Lower leg skin (tissue), 4 donors: ENCODE measurements at regions of chr1 and their contacts with region 1.

Region 1: DNA sequence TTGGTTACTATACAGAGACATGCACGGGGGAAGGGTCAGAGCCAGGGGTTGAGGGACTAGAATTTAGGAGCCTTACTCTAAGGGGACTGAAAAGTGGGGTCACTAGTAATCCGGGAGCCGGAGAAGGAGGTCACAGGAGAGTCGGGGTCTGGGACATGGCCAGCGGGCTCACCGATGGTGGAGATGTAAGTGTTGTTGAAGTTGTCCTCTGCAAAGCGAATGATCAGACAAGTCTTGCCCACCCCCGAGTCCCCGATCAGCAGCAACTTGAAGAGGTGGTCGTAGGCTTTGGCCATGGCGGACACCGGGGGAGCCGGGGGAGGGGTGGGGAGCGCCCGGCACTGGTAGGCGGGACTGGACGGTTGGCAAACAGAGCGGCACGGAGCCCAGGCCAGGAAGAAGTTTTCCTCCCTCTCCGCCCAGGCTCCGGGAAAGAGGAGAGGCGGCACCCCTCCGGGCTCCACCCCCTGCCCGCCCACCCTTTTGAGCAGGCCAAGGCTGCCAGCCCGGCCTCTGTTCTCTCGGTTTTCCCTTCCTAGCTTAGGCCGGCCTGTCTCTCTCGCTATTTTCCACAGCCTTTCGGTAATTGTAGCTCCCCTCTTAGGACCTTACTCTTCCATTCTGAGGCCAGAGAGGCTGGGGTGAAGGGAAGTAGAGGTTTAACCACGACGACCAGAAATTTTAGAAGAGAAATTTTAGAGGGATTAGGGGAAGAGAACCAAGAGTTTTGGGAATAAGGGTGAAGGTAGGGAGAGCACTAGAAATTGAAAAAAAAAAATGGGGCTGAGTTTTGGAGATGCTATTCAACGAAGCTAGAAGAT is at the start of gene RAB13:
- DNase-seq: peak; percentile 84 to 97
- H3K4me3 ChIP-seq: peak within 1 kb of the TSS; percentile 40
- CTCF ChIP-seq: peak in 1 of 3 donors; percentile 11
- POLR2A ChIP-seq: no peak
- total RNA-seq, gene RAB13: 15.6 to 29.4 (median 25.4) TPM

Region 2: DNA sequence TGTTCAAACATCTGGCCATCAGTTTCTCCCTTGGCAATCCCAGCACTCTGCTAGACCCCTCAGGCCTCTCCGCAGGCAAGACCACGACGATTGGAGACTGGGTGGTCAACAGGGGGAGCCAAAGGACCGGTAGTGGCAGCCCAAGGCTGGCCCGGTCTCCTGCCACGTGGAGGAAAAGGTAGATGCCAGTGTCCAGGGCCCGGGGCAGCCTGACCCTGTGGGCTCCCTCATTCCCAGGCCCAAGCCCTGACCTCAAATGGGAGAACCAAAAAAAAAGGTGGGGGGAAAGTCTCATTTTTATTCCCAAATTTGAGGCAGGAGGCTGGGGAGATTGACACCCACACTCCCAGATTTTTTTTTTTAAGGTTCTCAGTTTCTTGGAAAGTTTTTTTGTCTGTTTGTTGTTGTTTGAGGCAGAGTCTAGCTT is 475.2 kb before region 1 on chr1:
- intact Hi-C with region 1: loop called (anchors 10 kb)
- DNase-seq: peak in 1 of 2 donors; percentile 95
- H3K4me3 ChIP-seq: no peak overlapping the region
- CTCF ChIP-seq: peak in 1 of 3 donors; percentile 85
- POLR2A ChIP-seq: no peak

Region 3: DNA sequence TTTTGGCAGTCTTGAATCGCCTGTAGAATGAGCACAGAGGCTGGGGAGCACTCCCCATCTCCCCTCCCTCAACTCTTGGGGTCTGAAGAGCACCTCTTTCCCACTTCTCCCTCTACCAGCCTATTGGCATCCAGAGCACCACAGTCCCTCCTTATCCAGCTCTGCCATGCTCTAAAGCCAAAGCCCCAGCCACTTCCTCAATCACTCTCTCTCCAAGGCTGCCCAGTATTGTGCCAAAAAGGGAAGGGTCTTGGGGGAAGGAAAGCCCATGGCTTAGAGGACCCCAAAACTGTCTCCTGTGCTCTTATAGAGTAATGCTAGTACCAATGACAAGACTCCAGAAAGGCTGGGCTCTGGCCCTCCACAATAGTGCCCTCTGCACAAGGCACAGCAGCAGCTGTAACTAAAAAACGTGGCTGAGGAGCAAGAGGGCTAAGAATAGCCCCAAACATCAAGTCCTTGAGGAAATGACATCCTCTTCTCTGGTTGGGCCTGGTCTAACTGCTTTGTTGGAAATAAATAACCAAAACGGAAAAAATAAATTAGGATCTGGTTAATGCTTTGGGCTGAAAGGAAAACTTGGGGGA is 182.6 kb before region 1 on chr1:
- intact Hi-C with region 1: loop called (anchors 5 kb)
- DNase-seq: peak in 1 of 2 donors; percentile 66
- H3K4me3 ChIP-seq: no peak overlapping the region
- CTCF ChIP-seq: no peak
- POLR2A ChIP-seq: no peak

Region 4: DNA sequence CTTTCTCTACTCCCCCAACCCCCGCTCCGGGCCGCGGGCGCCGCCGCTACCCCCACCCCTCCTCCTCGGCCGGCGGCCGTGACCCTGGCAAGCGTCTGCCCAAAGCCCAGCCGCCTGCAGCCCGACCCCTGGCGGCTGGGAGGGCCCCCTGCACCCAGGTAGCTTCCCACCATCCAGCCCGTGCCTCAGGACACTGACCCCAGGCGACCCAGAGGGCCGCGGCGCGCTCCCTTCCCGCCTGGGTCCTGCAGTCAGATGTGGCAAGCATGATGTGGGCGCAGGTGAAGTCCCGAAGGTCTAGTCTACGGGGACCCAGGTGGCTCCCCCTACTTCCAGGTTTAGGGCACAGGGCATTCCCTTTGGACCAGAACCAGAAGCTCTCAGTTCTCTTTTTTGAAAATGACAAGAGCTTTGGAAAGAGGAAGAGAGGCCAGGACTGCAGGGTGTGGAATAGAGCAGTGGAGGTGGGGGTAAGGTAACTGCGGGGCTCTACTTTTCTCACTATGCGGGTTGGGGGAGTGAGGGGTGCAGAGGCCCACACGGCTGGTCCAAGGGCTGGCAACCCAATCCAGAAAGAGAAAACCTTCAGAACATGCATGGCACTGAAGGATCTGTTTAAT is 39.4 kb before region 1 on chr1 and contains the start of gene DENND4B:
- intact Hi-C with region 1: loop called (anchors 2 kb)
- DNase-seq: peak; percentile 66 to 95
- H3K4me3 ChIP-seq: peak within 1 kb of the TSS; percentile 91
- CTCF ChIP-seq: peak in 1 of 3 donors; percentile 90
- POLR2A ChIP-seq: no peak
- total RNA-seq, gene DENND4B: 18.4 to 31.1 (median 20.5) TPM

Region 5: GRCh38 chr1:154006136-154006535 is 20.0 kb after region 1 on chr1:
- intact Hi-C with region 1: no loop called
- DNase-seq: no peak
- H3K4me3 ChIP-seq: no peak overlapping the region
- CTCF ChIP-seq: no peak
- POLR2A ChIP-seq: no peak